Thyroid gland (tissue), 4 donors: ENCODE measurements at regions of chr6 and their contacts with region 1.

Region 1: DNA sequence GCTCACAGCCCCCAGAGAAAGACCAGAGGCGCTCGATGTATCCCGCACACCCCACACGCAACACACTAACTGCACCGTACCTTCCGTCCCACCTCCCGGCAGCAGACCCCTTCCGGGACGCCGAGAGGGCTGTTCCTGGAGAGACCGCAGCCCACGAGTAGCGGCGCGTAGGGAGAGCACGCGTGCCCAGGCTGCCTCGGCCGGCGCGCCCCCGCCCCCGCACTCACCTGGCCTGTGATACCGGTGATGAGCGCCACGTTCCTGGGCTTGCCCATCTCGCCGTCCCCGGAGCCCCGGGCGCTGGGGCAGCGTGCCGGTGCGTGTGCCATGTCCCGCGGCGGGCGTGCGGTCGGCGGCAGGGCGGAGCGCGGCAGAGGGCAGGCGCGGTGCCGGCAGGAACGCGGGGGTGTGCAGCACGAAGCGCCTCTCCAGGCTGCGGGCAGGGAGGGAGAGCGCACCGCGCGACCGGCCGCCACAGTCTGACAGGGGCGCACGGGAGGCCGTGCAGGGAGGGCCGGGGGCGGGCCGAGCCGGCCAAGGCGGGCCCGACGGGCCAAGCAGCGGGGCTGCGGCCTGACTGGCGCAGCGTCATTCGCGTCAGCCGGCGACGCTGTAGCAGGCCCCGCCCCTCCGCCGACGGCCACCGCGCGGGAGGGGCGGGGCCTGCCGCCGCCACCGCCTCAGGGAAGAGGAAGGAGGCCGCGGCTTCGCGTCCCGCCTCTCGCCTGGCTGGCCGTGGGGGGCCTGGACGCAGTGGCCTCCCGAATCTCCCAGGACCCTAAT is at the start of gene GMDS:
- DNase-seq: peak; percentile 86 to 88
- H3K4me3 ChIP-seq: peak within 1 kb of the TSS; percentile 33 to 81 (median 66)
- H3K27ac ChIP-seq: peak within 1 kb of the TSS; percentile 76 to 92 (median 86)
- H3K4me1 ChIP-seq: peaks cover 5 to 11% of the 10 kb centered on the region in 2 donors
- H3K27me3 ChIP-seq: no peaks in the 10 kb centered on the region
- CTCF ChIP-seq: peak in 2 of 6 experiments; percentile 1 to 22
- POLR2A ChIP-seq: peak; percentile 87 to 99
- total RNA-seq, gene GMDS: 9.5 to 32.8 (median 22.4) TPM

Region 2: DNA sequence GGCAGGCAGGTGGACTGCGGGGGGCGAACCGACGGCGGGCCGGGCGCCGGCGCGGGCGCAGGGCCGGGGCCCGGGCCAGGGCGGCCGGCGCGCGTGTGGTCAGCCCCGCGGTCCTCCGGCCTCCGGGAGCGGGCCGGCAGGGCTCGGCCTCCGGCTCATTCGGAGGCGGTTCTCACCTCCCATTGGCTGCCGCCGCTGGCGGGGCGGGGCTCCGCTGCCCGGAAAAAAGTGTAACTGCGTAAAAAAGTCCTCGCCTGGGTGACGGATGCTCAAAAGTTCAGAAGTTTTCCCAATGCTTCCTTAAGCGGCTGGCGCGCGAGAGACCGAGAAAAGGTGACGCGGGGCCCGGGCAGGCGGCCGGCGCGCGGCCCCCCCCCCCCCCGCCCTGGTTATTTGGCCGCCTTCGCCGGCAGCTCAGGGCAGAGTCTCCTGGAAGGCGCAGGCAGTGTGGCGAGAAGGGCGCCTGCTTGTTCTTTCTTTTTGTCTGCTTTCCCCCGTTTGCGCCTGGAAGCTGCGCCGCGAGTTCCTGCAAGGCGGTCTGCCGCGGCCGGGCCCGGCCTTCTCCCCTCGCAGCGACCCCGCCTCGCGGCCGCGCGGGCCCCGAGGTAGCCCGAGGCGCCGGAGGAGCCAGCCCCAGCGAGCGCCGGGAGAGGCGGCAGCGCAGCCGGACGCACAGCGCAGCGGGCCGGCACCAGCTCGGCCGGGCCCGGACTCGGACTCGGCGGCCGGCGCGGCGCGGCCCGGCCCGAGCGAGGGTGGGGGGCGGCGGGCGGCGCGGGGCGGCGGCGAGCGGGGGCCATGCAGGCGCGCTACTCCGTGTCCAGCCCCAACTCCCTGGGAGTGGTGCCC is 635.4 kb before region 1 on chr6 and contains the start of gene FOXC1:
- intact Hi-C with region 1: loop called (anchors 5 kb)
- DNase-seq: peak; percentile 79 to 81
- H3K4me3 ChIP-seq: peak within 1 kb of the TSS in 2 of 3 donors; percentile 51 to 56
- H3K27ac ChIP-seq: peak within 1 kb of the TSS; percentile 62 to 88 (median 88)
- H3K4me1 ChIP-seq: peaks cover 15 to 45% of the 10 kb centered on the region in 2 donors
- H3K27me3 ChIP-seq: peaks cover 56% of the 10 kb centered on the region
- CTCF ChIP-seq: no peak
- POLR2A ChIP-seq: peak in 1 of 2 donors; percentile 58
- total RNA-seq, gene FOXC1: 3.8 to 8.1 (median 5.5) TPM

Region 3: DNA sequence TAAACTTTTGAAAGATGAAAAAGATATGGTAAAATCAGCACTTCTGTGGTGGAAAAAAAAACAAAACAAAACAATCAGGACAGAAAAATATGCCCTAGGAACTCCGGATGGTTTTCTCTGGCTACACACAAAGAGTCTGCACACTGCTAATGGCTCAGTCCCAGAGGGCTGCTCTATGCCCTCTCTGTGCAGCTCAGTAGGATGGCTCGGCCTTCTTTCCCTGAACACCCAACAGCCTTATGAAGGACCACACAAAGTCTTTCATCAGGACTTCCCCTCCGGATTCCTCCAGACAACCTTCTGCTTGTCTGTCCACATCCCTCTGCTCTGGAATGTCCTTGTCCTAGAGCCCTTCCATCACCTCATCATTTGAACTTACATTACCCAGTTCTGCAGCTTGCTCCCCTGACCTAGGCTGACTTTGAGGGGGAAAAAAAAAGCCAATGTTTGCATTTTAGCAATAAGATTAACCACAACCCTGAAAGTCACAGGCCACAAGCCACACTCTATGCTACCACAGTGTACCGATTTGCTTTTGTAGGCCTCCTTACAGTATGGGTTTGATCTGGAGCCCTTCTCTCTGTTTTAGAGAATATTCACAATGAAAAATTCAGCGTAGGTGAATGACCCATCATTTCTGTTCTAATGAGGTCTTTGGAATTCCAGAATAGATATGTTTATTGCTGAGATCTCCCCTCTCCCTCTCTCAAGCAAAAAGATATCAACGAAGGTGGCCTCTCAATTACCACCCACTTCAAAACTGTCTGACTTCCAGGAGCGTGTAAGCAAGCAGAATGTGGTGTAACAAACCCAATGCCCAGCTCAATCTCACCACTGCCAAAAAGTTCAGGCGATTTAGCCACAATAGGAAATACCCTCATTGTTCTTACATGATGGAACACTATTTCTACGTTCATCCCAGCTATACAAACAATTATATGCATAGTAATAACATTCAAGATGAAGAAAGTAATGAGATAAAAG is 163.8 kb before region 1 on chr6:
- intact Hi-C with region 1: no loop called
- DNase-seq: no peak
- H3K4me3 ChIP-seq: no peak overlapping the region
- H3K27ac ChIP-seq: no peak overlapping the region
- H3K4me1 ChIP-seq: no peaks in the 10 kb centered on the region
- H3K27me3 ChIP-seq: no peaks in the 10 kb centered on the region
- CTCF ChIP-seq: no peak
- POLR2A ChIP-seq: no peak